Transverse colon (tissue), 4 donors: ENCODE measurements at regions of chr5 and their contacts with region 1.

Region 1: GRCh38 chr5:108369167-108369566 is 12.7 kb downstream of the FBXL17 start:
- DNase-seq: no peak
- H3K4me3 ChIP-seq: no peak overlapping the region
- H3K27ac ChIP-seq: no peak overlapping the region
- H3K4me1 ChIP-seq: no peaks in the 10 kb centered on the region
- H3K27me3 ChIP-seq: no peaks in the 10 kb centered on the region
- CTCF ChIP-seq: no peak
- EP300 ChIP-seq: no peak
- POLR2A ChIP-seq: no peak

Region 2: DNA sequence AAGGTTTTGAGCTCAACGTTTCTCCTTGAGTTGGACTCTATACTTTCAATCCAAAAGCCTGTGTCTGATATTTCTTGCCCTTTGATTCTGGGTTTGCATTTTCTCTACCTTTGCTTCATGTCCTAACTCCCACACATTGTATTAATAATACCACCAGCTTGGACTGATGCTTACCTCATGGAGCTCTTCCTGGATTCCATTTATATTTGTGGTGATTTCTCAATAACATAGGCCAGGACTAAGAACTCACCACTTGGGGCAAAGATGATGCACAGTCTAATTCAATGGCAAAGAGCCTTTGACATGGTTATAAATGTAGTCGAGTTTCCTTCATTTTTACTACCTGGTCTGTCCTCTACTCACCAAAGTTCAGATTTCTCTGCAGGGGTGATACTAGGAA is 670.9 kb before region 1 on chr5:
- in situ Hi-C with region 1: no loop called
- intact Hi-C with region 1: no loop called
- DNase-seq: no peak
- H3K4me3 ChIP-seq: no peak overlapping the region
- H3K27ac ChIP-seq: no peak overlapping the region
- H3K4me1 ChIP-seq: no peaks in the 10 kb centered on the region
- H3K27me3 ChIP-seq: no peaks in the 10 kb centered on the region
- CTCF ChIP-seq: no peak
- EP300 ChIP-seq: no peak
- POLR2A ChIP-seq: no peak

Region 3: GRCh38 chr5:108381954-108382783 is 13.0 kb after region 1 on chr5 and contains the start of gene FBXL17:
- in situ Hi-C with region 1: no loop called
- intact Hi-C with region 1: loop called (anchors 1 kb)
- DNase-seq: peak; percentile 96
- H3K4me3 ChIP-seq: peak within 1 kb of the TSS; percentile 71 to 86 (median 80)
- H3K27ac ChIP-seq: peak within 1 kb of the TSS; percentile 98 to 99 (median 98)
- H3K4me1 ChIP-seq: peaks cover 0 to 26% (median 14%) of the 10 kb centered on the region in 4 donors
- H3K27me3 ChIP-seq: no peaks in the 10 kb centered on the region
- CTCF ChIP-seq: peak in 1 of 5 experiments; percentile 6
- EP300 ChIP-seq: no peak
- POLR2A ChIP-seq: peak; percentile 84
- total RNA-seq, gene FBXL17: 17.7 to 99.5 (median 24.6) TPM

Region 4: DNA sequence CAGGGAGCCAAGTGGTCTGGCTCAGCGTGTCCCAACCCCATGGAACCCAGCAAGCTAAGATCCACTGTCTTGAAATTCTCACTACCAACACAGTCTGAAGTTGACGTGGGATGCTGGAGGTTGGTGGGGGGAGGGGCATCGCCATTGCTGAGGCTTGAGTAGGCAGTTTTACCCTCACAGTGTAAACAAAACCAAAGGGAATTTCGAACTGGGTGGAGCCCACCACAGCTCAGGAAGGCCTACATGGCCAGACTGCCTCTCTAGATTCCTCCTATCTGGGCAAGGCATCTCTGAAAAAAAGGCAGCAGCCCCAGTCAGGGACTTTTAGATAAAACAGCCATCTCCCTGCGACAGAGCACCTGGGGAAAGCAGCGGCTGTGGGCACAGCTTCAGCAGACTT is 29.8 kb after region 1 on chr5:
- in situ Hi-C with region 1: no loop called
- intact Hi-C with region 1: no loop called
- DNase-seq: no peak
- H3K4me3 ChIP-seq: no peak overlapping the region
- H3K27ac ChIP-seq: no peak overlapping the region
- H3K4me1 ChIP-seq: no peaks in the 10 kb centered on the region
- H3K27me3 ChIP-seq: peaks cover 3% of the 10 kb centered on the region
- CTCF ChIP-seq: no peak
- EP300 ChIP-seq: no peak
- POLR2A ChIP-seq: no peak